ENCODE measurements at regions of chr17 and their contacts with region 1.

Region 1: GRCh38 chr17:7435221-7435675 is at the start of gene TMEM102:
- DNase-seq: peak; percentile 95
- H3K4me3 Mint-ChIP-seq: peak within 1 kb of the TSS; percentile 75
- H3K27ac Mint-ChIP-seq: peak within 1 kb of the TSS; percentile 69
- H3K4me1 Mint-ChIP-seq: peaks cover 7% of the 10 kb centered on the region
- H3K27me3 Mint-ChIP-seq: peaks cover 24% of the 10 kb centered on the region
- CTCF ChIP-seq: no peak
- total RNA-seq, gene TMEM102: 8.5 TPM in 2 replicates

Region 2: DNA sequence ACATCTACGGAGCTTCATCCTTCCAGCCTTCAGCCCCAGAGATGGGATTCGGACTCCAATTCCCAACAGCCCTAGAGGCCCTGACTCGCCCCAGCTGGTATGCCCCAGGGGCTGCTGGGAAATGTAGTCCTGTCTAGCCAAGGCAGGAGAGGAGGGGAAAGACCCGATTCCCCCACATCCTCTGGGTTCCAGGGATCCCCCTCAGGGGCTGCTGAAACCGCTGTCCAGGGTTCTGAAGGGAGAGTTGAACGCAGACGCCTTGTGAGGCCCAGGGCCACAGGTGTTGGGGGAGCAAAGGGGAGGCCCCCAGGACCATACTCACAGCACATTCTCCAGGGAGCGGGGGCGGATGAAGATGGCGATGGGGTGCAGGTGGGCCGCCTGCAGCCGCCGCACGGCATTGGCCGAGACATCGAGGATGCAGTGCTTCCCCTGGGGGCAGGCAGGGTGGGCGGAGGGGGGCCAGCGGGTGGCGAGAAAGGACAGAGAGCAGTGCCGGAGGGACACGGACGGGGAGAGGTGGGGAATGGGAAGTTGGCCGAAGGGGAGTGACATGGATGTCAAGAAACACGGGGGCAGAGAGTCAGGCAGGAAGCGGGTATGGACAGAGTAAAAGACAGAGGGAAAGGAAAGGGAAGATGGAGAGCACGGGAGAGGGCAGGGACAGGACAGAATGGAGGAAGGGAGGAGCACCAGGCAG is 243.5 kb before region 1 on chr17:
- CTCF ChIA-PET with region 1: no interaction called
- intact Hi-C with region 1: no loop called
- DNase-seq: peak; percentile 50
- H3K4me3 Mint-ChIP-seq: no peak overlapping the region
- H3K27ac Mint-ChIP-seq: no peak overlapping the region
- H3K4me1 Mint-ChIP-seq: peaks cover 2% of the 10 kb centered on the region
- H3K27me3 Mint-ChIP-seq: peaks cover 26% of the 10 kb centered on the region
- CTCF ChIP-seq: no peak

Region 3: DNA sequence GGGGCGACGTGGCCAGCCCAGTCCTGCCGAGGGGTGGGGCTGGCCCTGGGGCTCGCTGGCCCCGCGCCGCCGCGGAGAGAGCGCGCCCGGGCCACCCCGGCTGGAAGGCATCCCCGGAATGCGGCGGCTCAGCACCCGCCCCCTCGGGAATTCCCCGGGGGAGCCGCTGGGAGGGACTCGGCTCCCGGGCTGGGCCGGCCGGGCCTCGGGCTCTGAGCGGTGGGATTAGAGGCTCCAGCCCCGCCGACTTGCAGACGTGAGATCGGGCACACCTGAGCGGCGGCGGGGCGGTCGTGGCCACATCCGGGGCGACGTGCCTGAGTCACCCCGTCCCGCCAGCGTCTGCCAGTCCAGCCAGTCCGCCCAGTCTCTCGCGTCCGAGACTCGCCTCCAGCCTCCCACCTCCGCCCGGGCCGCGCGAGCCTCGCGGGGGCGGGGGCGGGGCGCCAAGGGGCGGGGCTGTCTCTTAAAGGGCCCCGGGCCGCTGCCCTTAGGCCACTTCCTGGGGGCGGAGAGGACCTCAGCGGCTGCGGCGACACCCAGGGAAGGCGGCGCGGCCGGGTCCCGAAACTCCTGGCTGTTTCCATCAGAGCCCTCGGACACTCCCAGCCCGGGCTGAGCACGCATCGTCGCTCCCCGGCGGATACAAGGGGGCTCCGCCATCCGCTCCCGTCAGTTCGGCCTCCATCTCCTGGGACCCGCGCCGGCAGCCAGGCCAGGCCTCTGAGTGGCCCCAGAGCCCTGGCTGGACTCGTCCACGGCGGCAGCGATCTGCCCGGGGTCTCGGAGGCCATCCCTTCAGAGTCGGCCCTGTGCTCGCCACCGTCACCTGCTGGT is 83.4 kb before region 1 on chr17 and contains the start of gene KCTD11:
- CTCF ChIA-PET with region 1: interaction called, 8 read pairs
- intact Hi-C with region 1: loop called (anchors 5 kb)
- DNase-seq: peak; percentile 94
- H3K4me3 Mint-ChIP-seq: peak within 1 kb of the TSS; percentile 93
- H3K27ac Mint-ChIP-seq: peak within 1 kb of the TSS; percentile 95
- H3K4me1 Mint-ChIP-seq: peaks cover 28% of the 10 kb centered on the region
- H3K27me3 Mint-ChIP-seq: peaks cover 20% of the 10 kb centered on the region
- CTCF ChIP-seq: no peak
- total RNA-seq, gene KCTD11: 8.5 and 9.9 TPM in 2 replicates

Region 4: DNA sequence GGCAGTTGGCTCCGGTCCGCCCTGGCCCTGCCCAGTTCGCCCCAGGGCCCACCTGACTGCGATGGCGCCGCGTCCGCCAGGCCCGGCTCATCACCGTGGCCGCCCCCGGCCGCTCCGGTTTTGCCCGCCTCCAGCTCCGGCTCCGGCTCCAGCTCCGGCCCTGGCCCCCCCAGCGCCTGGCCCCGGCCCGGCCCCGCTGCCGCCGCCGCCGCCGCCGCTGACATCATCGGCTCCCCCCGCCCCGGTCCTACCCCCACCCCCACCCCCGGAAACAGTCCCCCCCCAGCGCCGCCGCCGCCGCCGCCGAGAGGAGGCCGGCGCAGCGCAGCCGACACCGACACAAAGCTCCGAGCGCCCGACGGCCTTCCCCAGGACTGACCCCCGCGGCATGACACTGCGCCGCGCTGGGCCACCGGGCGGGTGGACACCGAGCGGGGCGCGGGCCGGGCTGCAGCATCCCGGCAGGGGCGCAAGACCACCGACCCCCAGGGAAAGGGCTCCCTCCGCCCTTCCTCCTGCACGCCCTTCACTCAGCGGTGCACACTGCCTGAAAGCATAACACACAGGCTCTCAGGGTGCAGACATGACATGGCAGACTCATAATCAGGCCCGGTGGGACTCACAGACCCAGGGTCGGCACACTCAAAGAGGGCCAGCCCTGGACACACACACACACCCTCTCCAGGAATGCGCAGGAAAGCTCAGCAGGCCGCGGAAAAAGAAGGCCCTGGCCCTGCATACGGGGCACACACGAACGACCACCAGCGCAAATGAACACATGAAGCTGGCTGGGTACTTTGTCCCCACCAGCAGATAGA is 44.4 kb after region 1 on chr17 and contains the start of gene ZBTB4:
- CTCF ChIA-PET with region 1: interaction called, 3 read pairs
- intact Hi-C with region 1: loop called (anchors 5 kb)
- DNase-seq: peak; percentile 43
- H3K4me3 Mint-ChIP-seq: peak within 1 kb of the TSS; percentile 74
- H3K27ac Mint-ChIP-seq: peak within 1 kb of the TSS; percentile 76
- H3K4me1 Mint-ChIP-seq: peaks cover 47% of the 10 kb centered on the region
- H3K27me3 Mint-ChIP-seq: no peaks in the 10 kb centered on the region
- CTCF ChIP-seq: no peak
- total RNA-seq, gene ZBTB4: 27.2 and 28.1 TPM in 2 replicates